ENCODE measurements at regions of chr1 and their contacts with region 1.

Region 1: GRCh38 chr1:179706339-179706941 is 36.7 kb upstream of the FAM163A start:
- DNase-seq: no peak

Region 2: DNA sequence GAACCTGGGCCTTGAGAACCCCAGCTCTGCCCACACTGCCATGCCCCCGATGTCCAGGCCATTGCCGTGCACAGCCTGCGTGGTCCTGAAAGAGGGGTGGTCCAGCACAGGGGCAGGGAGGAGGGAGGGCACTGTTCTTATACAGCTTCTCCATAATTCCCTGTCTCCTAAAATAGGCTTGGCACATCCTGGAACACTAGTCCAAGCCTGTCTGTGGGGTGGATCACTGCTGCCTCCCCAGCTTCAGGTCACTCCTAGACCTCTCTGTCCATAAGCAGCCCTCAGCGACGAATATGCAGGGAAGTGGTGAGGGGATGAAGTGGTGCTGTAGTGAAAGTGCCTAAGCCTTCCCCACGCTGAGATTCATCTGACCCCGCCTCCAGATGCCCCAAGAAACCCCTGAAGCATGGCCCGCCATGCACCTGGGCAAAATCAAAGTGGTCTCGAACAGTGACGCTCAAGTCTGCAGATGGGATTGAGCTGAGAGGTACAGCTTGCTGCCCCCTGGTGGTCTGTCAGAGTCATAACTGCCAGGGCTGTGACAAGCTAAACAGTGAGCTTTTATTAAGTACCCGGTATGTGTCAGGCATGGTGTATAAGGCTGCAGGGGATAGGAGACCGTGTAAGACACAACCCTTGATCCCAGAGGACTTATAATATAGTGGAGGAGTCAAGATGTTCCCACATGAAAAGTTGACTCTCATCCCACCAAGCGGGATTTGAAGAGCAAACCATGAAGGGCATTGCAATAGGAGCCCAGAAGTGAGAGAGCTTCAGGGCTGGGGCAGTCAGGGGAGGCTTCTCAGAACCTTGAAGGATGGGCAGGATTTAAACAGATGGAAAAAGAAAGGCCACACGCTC is 103.3 kb after region 1 on chr1:
- intact Hi-C with region 1: loop called (anchors 5 kb)
- DNase-seq: no peak

Region 3: DNA sequence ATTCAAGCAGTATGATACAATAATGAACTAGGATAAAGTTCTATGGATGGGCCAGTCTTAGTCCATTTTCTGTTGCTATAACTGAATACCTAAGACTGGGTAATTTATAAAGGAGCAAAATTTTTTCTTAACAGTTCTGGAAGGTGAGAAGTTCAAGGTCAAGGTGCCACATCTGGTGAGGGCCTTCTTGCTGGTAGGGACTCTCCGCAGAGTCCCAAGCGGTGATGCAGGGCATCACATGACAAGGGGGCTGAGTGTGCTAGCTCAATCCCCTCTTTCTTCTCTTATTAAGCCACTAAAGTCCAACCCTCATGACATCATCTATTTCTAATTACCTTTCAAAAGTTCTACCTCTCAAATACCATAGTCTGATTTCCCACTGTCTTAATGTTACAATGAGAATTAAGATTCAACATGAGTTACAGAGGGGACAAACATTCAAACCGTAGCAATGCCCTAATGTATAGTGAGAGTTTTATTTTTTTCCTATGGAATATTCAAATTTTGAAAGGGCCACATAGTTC is 356.1 kb after region 1 on chr1:
- intact Hi-C with region 1: no loop called
- DNase-seq: no peak

Measured in posterior vena cava (tissue), 2 donors.